Panc1 (cell line): ENCODE measurements at regions of chr17 and their contacts with region 1.

Region 1: GRCh38 chr17:75889454-75889853 is 7.3 kb downstream of the TRIM65 start:
- DNase-seq: no peak
- ATAC-seq: no peak
- H3K4me3 ChIP-seq: no peak overlapping the region
- H3K27ac ChIP-seq: no peak overlapping the region
- H3K4me1 ChIP-seq: no peaks in the 10 kb centered on the region
- H3K27me3 ChIP-seq: no peaks in the 10 kb centered on the region
- CTCF ChIP-seq: no peak

Region 2: GRCh38 chr17:75877752-75878173 is 11.7 kb before region 1 on chr17:
- CTCF ChIA-PET with region 1: interaction called, 4 read pairs
- POLR2A ChIA-PET with region 1: interaction called, 16 read pairs
- in situ Hi-C with region 1: no loop called
- intact Hi-C with region 1: no loop called
- DNase-seq: no peak
- ATAC-seq: peak; percentile 70
- H3K4me3 ChIP-seq: peak overlapping the region; percentile 76 to 82
- H3K27ac ChIP-seq: peak overlapping the region; percentile 88
- H3K4me1 ChIP-seq: peaks cover 28% of the 10 kb centered on the region
- H3K27me3 ChIP-seq: no peaks in the 10 kb centered on the region
- CTCF ChIP-seq: no peak; the same call in 1 of the 2 replicates

Region 3: GRCh38 chr17:75978938-75979704 is 89.7 kb after region 1 on chr17 and contains the starts of genes ACOX1 and TEN1:
- CTCF ChIA-PET with region 1: no interaction called
- POLR2A ChIA-PET with region 1: interaction called, 18 read pairs
- in situ Hi-C with region 1: no loop called
- intact Hi-C with region 1: no loop called
- DNase-seq: peak; percentile 64
- ATAC-seq: peak; percentile 97
- H3K4me3 ChIP-seq: peak within 1 kb of the TSS; percentile 73 to 82
- H3K27ac ChIP-seq: peak within 1 kb of the TSS; percentile 94
- H3K4me1 ChIP-seq: peaks cover 21% of the 10 kb centered on the region
- H3K27me3 ChIP-seq: no peaks in the 10 kb centered on the region
- CTCF ChIP-seq: no peak
- total RNA-seq, gene ACOX1: 53.5 TPM
- total RNA-seq, gene TEN1: 41.3 TPM

Region 4: GRCh38 chr17:76292567-76292966 is 403.1 kb after region 1 on chr17:
- CTCF ChIA-PET with region 1: no interaction called
- POLR2A ChIA-PET with region 1: interaction called, 15 read pairs
- in situ Hi-C with region 1: no loop called
- intact Hi-C with region 1: no loop called
- DNase-seq: no peak
- ATAC-seq: no peak
- H3K4me3 ChIP-seq: no peak overlapping the region
- H3K27ac ChIP-seq: no peak overlapping the region
- H3K4me1 ChIP-seq: no peaks in the 10 kb centered on the region
- H3K27me3 ChIP-seq: no peaks in the 10 kb centered on the region
- CTCF ChIP-seq: no peak